ENCODE measurements at regions of chr5 and their contacts with region 1.

Region 1: DNA sequence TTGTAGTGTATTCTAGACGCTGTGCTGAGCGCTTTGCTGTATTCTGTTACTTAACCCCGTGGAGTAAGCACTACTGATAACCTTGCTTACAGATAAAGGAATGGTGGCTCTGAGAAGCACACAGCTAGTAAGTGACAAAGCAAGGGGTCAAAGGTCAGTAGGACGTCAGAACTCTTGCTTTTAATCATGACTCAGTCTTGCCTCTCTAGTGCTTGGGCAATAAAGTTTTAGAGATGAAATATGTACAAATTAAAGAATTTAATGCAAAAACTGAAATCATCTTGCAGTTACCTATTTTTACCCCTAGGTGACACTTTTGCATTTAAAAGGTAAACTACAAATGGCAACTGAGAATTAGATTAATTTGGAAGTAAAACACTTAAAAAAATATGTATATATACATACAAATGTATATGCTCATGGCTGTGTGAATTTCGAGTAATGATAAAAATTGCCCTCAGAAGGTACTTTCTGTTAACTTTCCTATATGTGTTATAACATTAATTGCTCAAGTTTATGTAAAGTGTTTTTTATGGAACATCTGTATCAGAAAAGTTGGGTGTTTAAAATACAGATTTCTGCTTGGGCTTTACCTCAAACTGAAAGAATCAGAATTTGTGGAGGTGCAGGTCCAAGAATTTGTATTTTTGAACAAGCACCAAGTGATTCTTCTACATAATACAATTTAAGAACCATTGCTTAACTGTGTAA is 175.1 kb upstream of the DAB2 start:
- DNase-seq: peak in 1 of 2 experiments; percentile 63
- H3K4me3 ChIP-seq: no peak overlapping the region
- H3K27ac ChIP-seq: no peak overlapping the region
- H3K4me1 ChIP-seq: peaks cover 12% of the 10 kb centered on the region
- H3K27me3 ChIP-seq: no peaks in the 10 kb centered on the region
- CTCF ChIP-seq: peak; percentile 85

Region 2: DNA sequence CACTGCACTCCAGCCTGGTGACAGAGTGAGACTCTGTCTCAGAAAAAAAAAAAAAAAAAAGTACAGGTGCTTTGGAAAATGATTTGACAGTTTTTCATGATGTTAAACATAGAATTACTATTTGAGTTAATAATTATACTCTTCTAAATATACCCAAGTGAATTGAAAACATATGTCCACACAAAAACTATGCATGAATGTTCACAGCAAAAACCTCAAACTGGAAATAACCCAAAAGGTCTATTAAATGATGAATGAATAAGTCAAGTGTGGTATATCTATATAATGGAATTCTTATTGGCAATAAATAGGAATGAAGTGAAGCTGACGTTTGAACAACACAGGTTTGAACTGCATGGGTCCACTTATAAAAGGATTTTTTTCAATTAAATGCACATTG is 32.1 kb after region 1 on chr5:
- CTCF ChIA-PET with region 1: no interaction called
- POLR2A ChIA-PET with region 1: no interaction called
- intact Hi-C with region 1: no loop called
- DNase-seq: no peak
- H3K4me3 ChIP-seq: no peak overlapping the region
- H3K27ac ChIP-seq: no peak overlapping the region
- H3K4me1 ChIP-seq: no peaks in the 10 kb centered on the region
- H3K27me3 ChIP-seq: no peaks in the 10 kb centered on the region
- CTCF ChIP-seq: no peak

Region 3: GRCh38 chr5:39648532-39649213 is 48.8 kb after region 1 on chr5:
- CTCF ChIA-PET with region 1: interaction called, 4 read pairs
- POLR2A ChIA-PET with region 1: no interaction called
- intact Hi-C with region 1: loop called (anchors 2 kb)
- DNase-seq: peak; percentile 61 to 66
- H3K4me3 ChIP-seq: no peak overlapping the region
- H3K27ac ChIP-seq: no peak overlapping the region
- H3K4me1 ChIP-seq: 0 out of 2 replicates have a peak, but pooled peaks cover 4% of the 10 kb centered on the region
- H3K27me3 ChIP-seq: no peaks in the 10 kb centered on the region
- CTCF ChIP-seq: no peak

Region 4: DNA sequence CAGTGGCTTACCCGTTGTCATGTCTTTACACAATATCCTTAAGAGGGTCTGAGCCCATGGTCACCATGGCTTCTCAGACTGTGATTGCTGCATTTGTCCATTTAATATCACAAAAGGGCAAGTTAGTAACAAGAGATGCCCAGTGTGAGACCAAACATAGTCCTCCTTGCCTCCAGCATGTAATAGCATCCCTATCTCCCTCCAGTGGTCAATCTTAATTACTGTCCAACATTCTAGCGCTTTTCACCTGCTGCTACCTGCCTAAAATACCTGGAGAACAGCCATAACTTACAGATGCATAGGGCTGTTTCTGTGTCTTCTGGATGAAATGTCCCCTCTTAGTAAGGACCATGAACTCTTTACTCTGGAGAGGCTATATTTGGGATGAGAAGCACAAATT is 92.1 kb after region 1 on chr5:
- CTCF ChIA-PET with region 1: interaction called, 3 read pairs
- POLR2A ChIA-PET with region 1: interaction called, 3 read pairs
- intact Hi-C with region 1: loop called (anchors 2 kb)
- DNase-seq: no peak
- H3K4me3 ChIP-seq: no peak overlapping the region
- H3K27ac ChIP-seq: no peak overlapping the region
- H3K4me1 ChIP-seq: no peaks in the 10 kb centered on the region
- H3K27me3 ChIP-seq: no peaks in the 10 kb centered on the region
- CTCF ChIP-seq: peak; percentile 62

Region 5: GRCh38 chr5:40017151-40017550 is 417.3 kb after region 1 on chr5:
- CTCF ChIA-PET with region 1: no interaction called
- POLR2A ChIA-PET with region 1: interaction called, 13 read pairs
- intact Hi-C with region 1: no loop called
- DNase-seq: no peak
- H3K4me3 ChIP-seq: no peak overlapping the region
- H3K27ac ChIP-seq: no peak overlapping the region
- H3K4me1 ChIP-seq: no peaks in the 10 kb centered on the region; the same call in 1 of the 2 replicates
- H3K27me3 ChIP-seq: no peaks in the 10 kb centered on the region
- CTCF ChIP-seq: no peak